Caco-2 (cell line): ENCODE measurements at regions of chr1 and their contacts with region 1.

Region 1: GRCh38 chr1:234851450-234852438 is 241.8 kb upstream of the IRF2BP2 start:
- DNase-seq: peak in 1 of 2 experiments; percentile 64
- H3K4me3 ChIP-seq: no peak overlapping the region
- H3K4me3 Mint-ChIP-seq: no peak overlapping the region
- H3K27ac Mint-ChIP-seq: no peak overlapping the region
- H3K4me1 ChIP-seq: peaks cover 21% of the 10 kb centered on the region
- H3K4me1 Mint-ChIP-seq: peaks cover 13% of the 10 kb centered on the region
- H3K27me3 ChIP-seq: no peaks in the 10 kb centered on the region
- H3K27me3 Mint-ChIP-seq: no peaks in the 10 kb centered on the region
- CTCF ChIP-seq: no peak

Region 2: GRCh38 chr1:235060607-235061470 is 209.1 kb after region 1 on chr1:
- CTCF ChIA-PET with region 1: no interaction called
- POLR2A ChIA-PET with region 1: interaction called, 15 read pairs
- intact Hi-C with region 1: no loop called
- DNase-seq: peak; percentile 78 to 88
- H3K4me3 ChIP-seq: no peak overlapping the region
- H3K4me3 Mint-ChIP-seq: peak overlapping the region; percentile 51
- H3K27ac Mint-ChIP-seq: peak overlapping the region; percentile 95
- H3K4me1 ChIP-seq: peaks cover 41% of the 10 kb centered on the region
- H3K4me1 Mint-ChIP-seq: peaks cover 51% of the 10 kb centered on the region
- H3K27me3 ChIP-seq: no peaks in the 10 kb centered on the region
- H3K27me3 Mint-ChIP-seq: no peaks in the 10 kb centered on the region
- CTCF ChIP-seq: no peak